PC-3 (cell line): ENCODE measurements at regions of chr11 and their contacts with region 1.

Region 1: DNA sequence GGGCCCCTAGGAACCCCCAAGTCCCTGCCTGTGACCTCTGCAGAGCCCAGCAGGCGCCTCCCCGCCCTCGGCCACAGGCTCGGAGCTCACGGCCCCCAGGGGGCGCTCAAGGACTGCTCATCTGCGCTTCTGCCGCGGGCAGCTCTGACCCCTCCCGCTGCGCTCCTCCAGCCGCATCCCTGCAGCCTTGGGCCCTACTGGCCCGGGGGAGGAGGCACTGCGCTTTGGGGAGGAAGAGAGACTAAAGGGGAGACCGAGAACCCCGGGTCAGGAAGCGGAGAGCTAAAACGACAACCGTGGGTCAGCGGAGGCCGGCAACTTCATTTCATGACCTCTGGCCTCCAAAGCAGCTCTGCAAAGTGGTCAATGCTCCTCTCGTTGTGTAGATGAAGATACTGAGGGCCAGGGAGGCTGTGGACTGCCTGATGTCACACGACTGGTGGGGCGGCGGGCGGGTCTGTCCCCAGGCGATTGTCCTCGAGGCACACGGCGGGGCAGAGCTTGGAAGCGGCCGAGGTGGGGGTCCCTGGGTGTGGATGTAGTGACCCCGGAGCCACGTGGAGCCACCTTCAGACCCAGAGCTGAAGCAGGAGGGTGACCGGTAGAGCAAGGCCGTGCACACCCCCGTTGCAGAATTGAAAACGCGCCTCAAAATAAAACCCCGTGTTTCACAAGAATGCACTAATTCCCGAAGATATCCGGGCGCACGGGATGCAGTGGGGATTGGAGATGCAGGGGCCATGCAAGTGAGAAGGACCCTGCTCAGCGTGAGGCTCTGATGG is 2.7 kb upstream of the KRTAP5-6 start:
- DNase-seq: peak; percentile 86
- ATAC-seq: peak; percentile 90
- H3K4me3 ChIP-seq: peak overlapping the region; percentile 63; the same call in 1 of the 2 replicates
- H3K27ac ChIP-seq: no peak overlapping the region
- H3K4me1 ChIP-seq: peaks cover 7% of the 10 kb centered on the region; the same call in 1 of the 2 replicates
- H3K27me3 ChIP-seq: no peaks in the 10 kb centered on the region
- CTCF ChIP-seq: peak; percentile 83

Region 2: DNA sequence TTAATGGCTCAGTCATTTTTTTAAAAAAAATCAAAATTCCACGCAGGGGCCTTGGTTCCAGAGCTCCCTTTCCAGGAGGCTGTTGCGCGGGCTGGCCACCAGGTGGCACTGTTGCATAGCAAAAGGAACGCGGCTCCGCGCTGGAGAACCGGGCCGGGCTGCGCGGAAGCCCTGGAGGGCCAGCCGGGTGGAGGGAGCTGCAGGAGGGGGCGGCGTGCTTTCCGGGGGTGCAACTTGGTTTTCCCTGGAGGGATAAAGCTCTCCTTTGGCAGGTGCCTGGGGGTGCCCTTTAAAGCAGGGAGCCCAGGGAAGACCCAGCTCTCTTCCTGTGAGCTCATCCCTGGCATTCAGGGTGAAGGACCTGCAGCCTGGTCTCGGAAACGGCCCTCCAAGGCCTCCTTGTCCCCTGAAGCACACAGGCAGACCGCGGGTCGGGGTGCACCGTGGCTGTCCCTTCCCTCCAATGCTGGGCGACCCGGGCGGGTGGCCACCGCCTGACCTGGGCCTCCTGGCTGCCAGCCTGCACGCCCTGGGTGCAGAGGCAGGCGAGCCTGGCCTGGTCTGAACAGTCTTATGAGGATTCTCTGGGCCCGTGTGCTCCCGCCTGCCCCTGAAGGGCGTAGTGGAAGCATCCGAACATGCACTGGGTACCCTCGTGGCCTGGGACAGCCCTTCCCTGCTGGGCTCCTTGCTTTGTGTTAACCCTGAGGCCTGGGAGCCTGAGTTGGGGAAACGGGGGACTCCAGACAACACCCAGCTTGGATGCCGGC is 41.3 kb before region 1 on chr11:
- CTCF ChIA-PET with region 1: interaction called, 11 read pairs
- POLR2A ChIA-PET with region 1: no interaction called
- intact Hi-C with region 1: loop called (anchors 5 kb)
- DNase-seq: peak; percentile 70
- ATAC-seq: peak; percentile 89
- H3K4me3 ChIP-seq: no peak overlapping the region
- H3K27ac ChIP-seq: no peak overlapping the region
- H3K4me1 ChIP-seq: no peaks in the 10 kb centered on the region
- H3K27me3 ChIP-seq: 0 out of 2 replicates have a peak, but pooled peaks cover 5% of the 10 kb centered on the region
- CTCF ChIP-seq: peak; percentile 91

Region 3: DNA sequence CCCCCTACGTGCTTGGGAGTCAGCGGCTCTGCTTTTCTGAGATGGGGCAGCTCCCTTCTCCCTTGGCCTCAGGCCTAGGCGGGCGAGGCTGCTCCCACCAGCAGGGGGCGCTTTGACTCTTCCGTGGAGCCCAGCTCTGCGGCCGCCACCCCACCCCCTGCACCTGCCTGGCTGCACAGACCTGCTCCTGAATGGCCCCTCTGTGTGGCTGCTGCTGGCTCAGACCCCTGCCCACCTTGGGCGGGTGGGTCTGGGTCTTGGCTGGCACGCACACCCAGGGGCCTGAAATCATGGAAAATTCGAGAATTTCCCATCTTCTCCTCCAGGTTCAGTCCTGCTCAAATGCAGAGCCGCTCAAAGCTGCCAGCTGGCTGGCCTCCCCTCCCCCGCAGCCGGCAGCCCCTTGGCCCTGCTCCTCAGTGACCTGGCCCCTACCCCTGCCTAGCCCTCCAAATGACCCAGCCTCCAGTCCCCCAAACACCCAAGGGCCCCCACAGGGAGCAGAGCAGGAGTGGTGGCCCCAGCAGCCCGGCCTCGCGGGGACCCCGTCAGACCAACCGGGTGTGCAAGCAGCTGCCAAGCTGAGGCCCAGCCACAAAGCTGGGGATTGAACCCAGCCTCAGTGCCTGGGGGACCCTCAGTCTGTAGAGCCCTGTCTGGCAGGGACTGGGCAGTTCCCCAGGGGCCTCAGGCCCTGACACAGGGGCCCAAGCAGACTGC is 188.4 kb after region 1 on chr11:
- CTCF ChIA-PET with region 1: interaction called, 11 read pairs
- POLR2A ChIA-PET with region 1: no interaction called
- intact Hi-C with region 1: no loop called
- DNase-seq: peak; percentile 77
- ATAC-seq: peak; percentile 96
- H3K4me3 ChIP-seq: no peak overlapping the region
- H3K27ac ChIP-seq: no peak overlapping the region
- H3K4me1 ChIP-seq: no peaks in the 10 kb centered on the region
- H3K27me3 ChIP-seq: no peaks in the 10 kb centered on the region; the same call in 1 of the 2 replicates
- CTCF ChIP-seq: peak; percentile 83

Region 4: DNA sequence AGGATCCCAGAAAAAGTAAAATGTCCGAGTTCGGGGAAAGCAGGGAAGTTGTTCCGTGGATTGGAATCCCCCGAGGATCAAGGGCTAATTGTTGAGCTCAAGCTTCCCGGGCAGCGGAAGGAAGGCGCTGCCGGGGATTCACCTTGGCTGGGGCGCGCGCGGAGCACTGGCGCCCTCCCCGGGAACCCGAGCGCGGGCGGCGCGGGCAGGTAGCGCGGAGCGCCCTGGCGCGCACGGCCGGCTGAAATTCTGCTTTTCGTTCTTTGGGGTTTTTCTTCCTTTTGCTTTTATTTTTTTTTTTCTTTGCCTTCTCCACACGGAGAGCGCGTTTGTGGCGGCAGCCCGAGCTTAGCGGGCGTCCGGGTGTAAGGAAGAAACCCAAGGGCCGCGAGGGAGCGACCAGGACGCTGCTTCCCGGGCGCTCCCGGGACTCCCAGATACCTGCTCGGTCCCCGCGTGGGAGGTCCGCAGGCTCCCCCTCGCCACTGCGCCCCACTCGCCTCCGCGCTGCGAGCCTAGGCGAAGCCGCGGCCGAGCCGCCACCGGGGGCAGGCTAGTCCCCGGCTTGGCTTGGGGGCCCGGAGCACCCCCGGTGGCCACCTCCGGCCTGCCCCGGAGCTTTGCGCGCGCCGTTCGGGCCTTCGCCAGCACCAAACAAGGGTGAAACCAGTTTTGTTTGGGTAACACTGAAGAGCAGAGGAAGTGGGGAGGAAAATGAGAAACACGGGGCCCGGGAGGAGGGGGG is 449.7 kb after region 1 on chr11:
- CTCF ChIA-PET with region 1: interaction called, 18 read pairs
- POLR2A ChIA-PET with region 1: no interaction called
- intact Hi-C with region 1: no loop called
- DNase-seq: peak; percentile 21
- ATAC-seq: no peak
- H3K4me3 ChIP-seq: peak overlapping the region; percentile 41
- H3K27ac ChIP-seq: no peak overlapping the region
- H3K4me1 ChIP-seq: peaks cover 14% of the 10 kb centered on the region
- H3K27me3 ChIP-seq: peaks cover 67% of the 10 kb centered on the region
- CTCF ChIP-seq: no peak; the same call in 1 of the 2 replicates